ENCODE measurements at regions of chr16 and their contacts with region 1.

Region 1: GRCh38 chr16:70428178-70428998 is 10.5 kb downstream of the ST3GAL2 start:
- DNase-seq: peak; percentile 94 to 99 (median 95)
- ATAC-seq: peak; percentile 91 to 93 (median 91)
- H3K4me3 ChIP-seq: peak overlapping the region in 3 of 12 donors; percentile 10 to 19 (median 11)
- H3K27ac ChIP-seq: peak overlapping the region; percentile 53 to 94 (median 87)
- H3K4me1 ChIP-seq: peaks cover 36 to 77% (median 61%) of the 10 kb centered on the region in 12 donors
- H3K27me3 ChIP-seq: no peaks in the 10 kb centered on the region
- CTCF ChIP-seq: no peak
- POLR2A ChIP-seq: no peak

Region 2: DNA sequence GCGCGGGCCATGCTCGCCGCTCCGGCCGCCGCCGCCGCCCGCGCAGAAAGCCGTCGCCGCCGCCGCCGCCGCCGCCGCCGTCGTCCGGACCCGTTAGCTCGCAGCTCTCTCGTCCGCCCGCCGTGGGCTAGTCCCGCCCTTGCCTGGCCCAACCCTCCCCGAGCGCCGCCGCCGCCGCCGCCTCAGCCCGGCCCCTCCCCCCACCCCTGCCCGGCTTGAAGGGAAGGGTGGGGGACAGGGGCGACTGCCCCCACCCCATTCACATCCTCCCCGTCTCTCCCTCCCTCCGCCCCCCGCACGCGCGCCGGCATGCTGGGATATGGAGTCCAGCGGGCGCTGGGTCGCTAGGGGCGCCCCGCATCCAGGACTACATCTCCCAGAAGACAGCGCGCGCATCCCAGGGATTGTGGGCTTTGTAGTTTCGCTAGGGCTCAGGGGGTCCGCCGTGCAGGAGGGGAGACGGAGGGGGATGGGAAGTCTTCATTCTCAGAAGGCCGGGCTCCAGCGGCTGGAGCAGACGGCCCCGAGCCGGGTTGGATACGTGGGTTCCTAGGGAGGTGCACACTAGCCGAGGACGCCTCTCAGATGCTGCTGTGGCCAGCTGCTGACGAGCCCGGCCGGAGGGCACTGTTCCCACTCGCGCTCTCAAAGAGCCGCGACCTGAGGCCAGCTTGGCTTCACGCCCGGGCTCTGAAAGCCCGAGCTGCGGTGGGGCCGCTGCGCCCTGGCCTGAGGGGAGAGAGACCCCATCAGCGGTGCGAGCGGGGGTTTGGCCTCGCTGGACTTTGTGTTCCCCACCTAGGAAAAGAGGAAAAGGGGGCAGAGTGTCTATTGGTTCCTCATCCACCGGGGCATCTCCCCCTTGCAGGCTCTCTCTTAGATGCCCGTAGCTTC is 10.8 kb after region 1 on chr16 and contains the start of gene ST3GAL2:
- intact Hi-C with region 1: loop called in 1 of 10 experiments (anchors 1 kb)
- DNase-seq: peak; percentile 96 to 98 (median 96)
- ATAC-seq: peak; percentile 98 to 99 (median 98)
- H3K4me3 ChIP-seq: peak within 1 kb of the TSS; percentile 42 to 98 (median 80)
- H3K27ac ChIP-seq: peak within 1 kb of the TSS; percentile 50 to 85 (median 78)
- H3K4me1 ChIP-seq: peaks cover 0 to 48% (median 27%) of the 10 kb centered on the region in 12 donors
- H3K27me3 ChIP-seq: no peaks in the 10 kb centered on the region
- CTCF ChIP-seq: peak in 5 of 12 donors; percentile 6 to 41 (median 29)
- POLR2A ChIP-seq: no peak
- total RNA-seq, gene ST3GAL2: 16.7 to 44.6 (median 20.1) TPM

Region 3: GRCh38 chr16:70495425-70496182 is 67.2 kb after region 1 on chr16:
- intact Hi-C with region 1: no loop called
- DNase-seq: no peak
- ATAC-seq: no peak
- H3K4me3 ChIP-seq: no peak overlapping the region
- H3K27ac ChIP-seq: no peak overlapping the region
- H3K4me1 ChIP-seq: peaks cover 0 to 10% (median 0%) of the 10 kb centered on the region in 12 donors
- H3K27me3 ChIP-seq: no peaks in the 10 kb centered on the region
- CTCF ChIP-seq: no peak
- POLR2A ChIP-seq: no peak